ENCODE measurements at regions of chr19 and their contacts with region 1.

Region 1: DNA sequence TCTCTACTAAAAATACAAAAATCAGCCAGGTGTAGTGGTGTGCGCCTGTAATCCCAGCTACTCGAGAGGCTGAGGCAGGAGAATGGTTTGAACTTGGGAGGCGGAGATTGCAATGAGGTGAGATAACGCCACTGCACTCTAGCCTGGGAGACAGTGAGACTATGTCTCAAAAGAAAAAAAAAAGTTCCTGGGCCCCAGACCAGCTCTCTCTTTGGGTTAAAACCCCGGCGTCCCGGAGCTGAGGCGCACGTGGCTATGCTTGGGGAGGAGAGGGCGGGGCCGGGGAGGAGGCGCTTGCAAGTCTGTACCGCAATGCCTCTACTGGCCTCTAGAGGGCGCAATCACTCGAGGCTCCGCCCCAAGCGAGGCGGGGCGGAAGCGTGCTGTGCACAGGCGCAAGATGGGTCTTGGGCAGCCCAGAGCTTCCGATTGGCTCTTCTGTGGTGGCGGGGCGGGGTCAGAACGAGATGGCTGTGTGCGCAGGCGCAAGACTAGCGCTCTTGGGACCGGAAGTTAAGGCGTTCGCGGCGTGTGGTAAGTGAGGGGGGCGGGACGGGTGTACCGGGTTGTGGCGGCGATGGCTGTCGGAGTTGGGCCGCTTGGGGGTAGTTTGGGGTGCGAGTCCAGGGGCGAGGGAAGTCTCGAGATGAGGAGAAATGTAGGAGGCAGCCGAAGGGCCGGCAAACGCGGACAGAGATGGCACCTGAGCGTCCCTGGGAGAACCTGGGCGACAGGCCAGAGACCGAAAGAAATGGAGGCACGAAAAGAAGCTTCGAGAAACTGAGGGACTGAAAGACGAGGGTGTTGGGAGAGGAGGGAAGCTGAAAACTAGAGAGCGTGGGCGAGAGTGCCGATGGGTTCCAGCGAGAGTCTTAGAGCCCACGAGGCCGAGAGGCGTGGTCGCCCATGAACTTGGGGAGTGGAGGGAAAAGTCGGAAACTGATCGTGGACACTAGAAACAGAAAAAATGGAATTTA is at the start of gene DHX34:
- DNase-seq: peak; percentile 99
- H3K4me3 ChIP-seq: peak within 1 kb of the TSS; percentile 76
- H3K27ac ChIP-seq: no peak within 1 kb of the TSS
- H3K27me3 ChIP-seq: no peaks in the 10 kb centered on the region
- CTCF ChIP-seq: peak; percentile 96
- polyA plus RNA-seq, gene DHX34: 4.2 and 6.0 TPM in 2 replicates

Region 2: GRCh38 chr19:47225746-47226425 is 123.2 kb before region 1 on chr19:
- CTCF ChIA-PET with region 1: no interaction called
- POLR2A ChIA-PET with region 1: no interaction called
- DNase-seq: peak; percentile 59
- H3K4me3 ChIP-seq: peak overlapping the region; percentile 98
- H3K27ac ChIP-seq: peak overlapping the region; percentile 77
- H3K27me3 ChIP-seq: no peaks in the 10 kb centered on the region
- CTCF ChIP-seq: no peak; the same call in none of the 2 replicates

Region 3: GRCh38 chr19:47284324-47284899 is 64.7 kb before region 1 on chr19:
- CTCF ChIA-PET with region 1: interaction called, 19 read pairs
- POLR2A ChIA-PET with region 1: interaction called, 5 read pairs
- DNase-seq: peak; percentile 33
- H3K4me3 ChIP-seq: no peak overlapping the region
- H3K27ac ChIP-seq: no peak overlapping the region
- H3K27me3 ChIP-seq: no peaks in the 10 kb centered on the region
- CTCF ChIP-seq: peak; percentile 83

Region 4: GRCh38 chr19:47305309-47305751 is 43.8 kb before region 1 on chr19:
- CTCF ChIA-PET with region 1: interaction called, 14 read pairs
- POLR2A ChIA-PET with region 1: interaction called, 4 read pairs
- DNase-seq: peak; percentile 78
- H3K4me3 ChIP-seq: peak overlapping the region; percentile 27
- H3K27ac ChIP-seq: peak overlapping the region; percentile 21
- H3K27me3 ChIP-seq: no peaks in the 10 kb centered on the region
- CTCF ChIP-seq: peak; percentile 98

Region 5: DNA sequence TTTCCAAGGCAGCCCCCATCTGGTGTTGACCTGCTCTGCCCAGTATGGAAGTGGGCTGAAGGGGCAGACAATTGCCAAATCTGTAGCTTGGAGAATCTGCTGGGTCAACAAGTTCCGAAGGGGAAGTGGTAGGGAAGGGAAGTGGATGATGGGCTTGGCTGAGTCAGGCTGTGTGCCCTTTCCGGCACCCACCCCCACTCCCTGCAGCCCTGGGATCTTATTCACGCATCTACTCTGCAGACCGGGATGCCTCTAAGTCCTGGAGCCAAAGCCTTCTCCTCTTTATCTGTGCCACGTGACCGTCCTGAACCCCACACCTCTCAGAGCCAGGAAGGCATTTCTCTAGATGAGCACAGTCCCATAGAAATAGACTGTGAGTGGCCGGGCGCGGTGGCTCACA is 24.6 kb before region 1 on chr19:
- CTCF ChIA-PET with region 1: interaction called, 22 read pairs
- POLR2A ChIA-PET with region 1: interaction called, 5 read pairs
- DNase-seq: no peak
- H3K4me3 ChIP-seq: no peak overlapping the region
- H3K27ac ChIP-seq: no peak overlapping the region
- H3K27me3 ChIP-seq: peaks cover 3% of the 10 kb centered on the region
- CTCF ChIP-seq: no peak

Region 6: GRCh38 chr19:47336853-47337279 is 12.2 kb before region 1 on chr19:
- CTCF ChIA-PET with region 1: interaction called, 48 read pairs
- POLR2A ChIA-PET with region 1: no interaction called
- DNase-seq: no peak
- H3K4me3 ChIP-seq: no peak overlapping the region
- H3K27ac ChIP-seq: no peak overlapping the region
- H3K27me3 ChIP-seq: peaks cover 5% of the 10 kb centered on the region
- CTCF ChIP-seq: no peak

Region 7: GRCh38 chr19:47391510-47392223 is 42.6 kb after region 1 on chr19:
- CTCF ChIA-PET with region 1: interaction called, 18 read pairs
- POLR2A ChIA-PET with region 1: no interaction called
- DNase-seq: peak; percentile 23
- H3K4me3 ChIP-seq: no peak overlapping the region
- H3K27ac ChIP-seq: no peak overlapping the region
- H3K27me3 ChIP-seq: peaks cover 3% of the 10 kb centered on the region
- CTCF ChIP-seq: peak; percentile 93

Measured in AG04450 (cell line).